Heart right ventricle (tissue), 16 donors: ENCODE measurements at regions of chr12 and their contacts with region 1.

Region 1: DNA sequence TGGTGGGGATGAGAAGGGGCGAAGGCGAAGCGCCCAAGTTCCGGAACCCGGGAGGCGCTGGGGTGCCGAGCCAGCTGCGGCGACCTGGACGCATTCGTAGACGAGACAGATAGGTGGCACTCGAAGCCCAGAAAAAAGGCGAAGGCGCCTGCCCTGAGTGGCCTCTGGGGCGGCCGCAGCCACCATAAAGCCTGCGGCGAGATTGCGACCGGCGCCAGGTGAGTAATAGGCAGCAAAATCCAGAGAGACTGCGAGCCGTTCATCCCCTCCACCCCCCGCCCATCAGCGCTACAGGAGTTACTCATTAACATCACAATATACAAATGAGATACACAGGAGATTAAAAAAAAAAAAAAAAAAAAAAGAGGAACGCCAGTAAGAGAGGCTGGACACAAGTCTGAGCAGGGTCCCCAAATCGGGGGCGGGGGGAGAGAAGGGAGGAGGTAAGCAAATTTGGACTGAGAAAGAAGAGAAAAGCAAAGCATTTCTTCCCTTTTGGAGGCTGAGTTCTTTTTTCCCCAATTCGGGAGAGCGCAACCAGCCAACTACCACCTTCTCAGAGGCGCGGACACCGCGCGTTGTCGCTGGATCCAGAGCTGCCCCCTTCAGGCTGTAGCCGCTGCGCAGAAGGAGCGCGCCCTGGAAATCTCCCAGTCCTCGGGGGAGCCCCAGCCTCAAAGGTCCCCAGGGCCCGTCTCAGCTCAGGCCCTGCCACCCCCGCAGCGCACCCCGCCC is 15.7 kb downstream of the TBX3 start:
- DNase-seq: peak; percentile 78 to 81
- ATAC-seq: peak; percentile 88 to 94 (median 92)
- H3K4me3 ChIP-seq: peak overlapping the region in 9 of 10 donors; percentile 33 to 54 (median 50)
- H3K27ac ChIP-seq: peak overlapping the region in 6 of 10 donors; percentile 22 to 48 (median 31)
- H3K4me1 ChIP-seq: peaks cover 2 to 43% (median 18%) of the 10 kb centered on the region in 9 donors
- H3K27me3 ChIP-seq: peaks cover 6 to 100% (median 51%) of the 10 kb centered on the region in 7 donors
- CTCF ChIP-seq: peak; percentile 39 to 79 (median 65)

Region 2: GRCh38 chr12:114611145-114612018 is 56.9 kb before region 1 on chr12:
- intact Hi-C with region 1: no loop called
- DNase-seq: no peak
- ATAC-seq: no peak
- H3K4me3 ChIP-seq: no peak overlapping the region
- H3K27ac ChIP-seq: no peak overlapping the region
- H3K4me1 ChIP-seq: no peaks in the 10 kb centered on the region
- H3K27me3 ChIP-seq: peaks cover 0 to 34% (median 4%) of the 10 kb centered on the region in 7 donors
- CTCF ChIP-seq: no peak

Region 3: GRCh38 chr12:114636723-114637483 is 31.4 kb before region 1 on chr12:
- intact Hi-C with region 1: no loop called
- DNase-seq: no peak
- ATAC-seq: no peak
- H3K4me3 ChIP-seq: no peak overlapping the region
- H3K27ac ChIP-seq: no peak overlapping the region
- H3K4me1 ChIP-seq: no peaks in the 10 kb centered on the region
- H3K27me3 ChIP-seq: peaks cover 0 to 13% (median 1%) of the 10 kb centered on the region in 7 donors
- CTCF ChIP-seq: peak in 6 of 9 donors; percentile 19 to 34 (median 24)

Region 4: GRCh38 chr12:115638733-115639647 is 970.7 kb after region 1 on chr12:
- intact Hi-C with region 1: loop called in 9 of 10 experiments (anchors 5 to 10 kb)
- DNase-seq: no peak
- ATAC-seq: peak in 4 of 8 donors; percentile 26 to 38 (median 33)
- H3K4me3 ChIP-seq: no peak overlapping the region
- H3K27ac ChIP-seq: peak overlapping the region in 1 of 10 donors; percentile 15
- H3K4me1 ChIP-seq: peaks cover 0 to 17% (median 5%) of the 10 kb centered on the region in 9 donors
- H3K27me3 ChIP-seq: peaks cover 0 to 10% (median 0%) of the 10 kb centered on the region in 7 donors
- CTCF ChIP-seq: no peak